HAP-1 (cell line): ENCODE measurements at regions of chr5 and their contacts with region 1.

Region 1: DNA sequence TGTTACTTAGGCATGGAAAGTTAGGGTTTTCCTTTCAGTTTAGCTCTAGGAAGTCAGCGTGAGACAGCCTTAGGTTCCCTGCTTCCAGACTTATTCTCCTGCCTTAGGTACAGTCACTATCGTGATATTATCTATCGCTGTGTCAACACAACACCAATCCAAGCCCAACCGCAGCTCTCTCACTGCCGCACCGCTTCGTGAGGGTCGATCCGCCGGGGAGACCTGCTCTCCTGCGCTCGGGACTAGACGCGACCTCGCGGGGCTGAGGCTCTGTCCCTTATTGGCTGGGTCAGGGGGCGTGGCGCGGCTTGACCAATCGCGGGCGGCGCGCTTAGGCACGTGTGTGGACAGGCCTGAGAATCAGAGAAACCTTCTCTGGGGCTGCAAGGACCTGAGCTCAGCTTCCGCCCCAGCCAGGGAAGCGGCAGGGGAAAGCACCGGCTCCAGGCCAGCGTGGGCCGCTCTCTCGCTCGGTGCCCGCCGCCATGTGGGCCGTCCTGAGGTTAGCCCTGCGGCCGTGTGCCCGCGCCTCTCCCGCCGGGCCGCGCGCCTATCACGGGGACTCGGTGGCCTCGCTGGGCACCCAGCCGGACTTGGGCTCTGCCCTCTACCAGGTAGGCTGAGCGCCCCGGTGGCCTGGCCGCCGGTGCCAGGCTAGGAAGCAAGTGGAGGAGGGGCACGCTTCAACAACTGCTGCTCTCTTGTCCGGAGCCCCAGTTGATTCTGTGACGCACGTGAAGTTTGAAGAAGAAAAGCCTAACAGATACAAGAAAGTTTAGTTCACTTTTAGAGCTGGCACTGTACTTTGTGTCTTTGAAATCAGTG is at the start of gene MCCC2:
- DNase-seq: peak; percentile 87 to 98
- H3K4me3 ChIP-seq: peak within 1 kb of the TSS; percentile 58
- H3K4me1 ChIP-seq: peaks cover 16% of the 10 kb centered on the region
- H3K27me3 ChIP-seq: no peaks in the 10 kb centered on the region

Region 2: DNA sequence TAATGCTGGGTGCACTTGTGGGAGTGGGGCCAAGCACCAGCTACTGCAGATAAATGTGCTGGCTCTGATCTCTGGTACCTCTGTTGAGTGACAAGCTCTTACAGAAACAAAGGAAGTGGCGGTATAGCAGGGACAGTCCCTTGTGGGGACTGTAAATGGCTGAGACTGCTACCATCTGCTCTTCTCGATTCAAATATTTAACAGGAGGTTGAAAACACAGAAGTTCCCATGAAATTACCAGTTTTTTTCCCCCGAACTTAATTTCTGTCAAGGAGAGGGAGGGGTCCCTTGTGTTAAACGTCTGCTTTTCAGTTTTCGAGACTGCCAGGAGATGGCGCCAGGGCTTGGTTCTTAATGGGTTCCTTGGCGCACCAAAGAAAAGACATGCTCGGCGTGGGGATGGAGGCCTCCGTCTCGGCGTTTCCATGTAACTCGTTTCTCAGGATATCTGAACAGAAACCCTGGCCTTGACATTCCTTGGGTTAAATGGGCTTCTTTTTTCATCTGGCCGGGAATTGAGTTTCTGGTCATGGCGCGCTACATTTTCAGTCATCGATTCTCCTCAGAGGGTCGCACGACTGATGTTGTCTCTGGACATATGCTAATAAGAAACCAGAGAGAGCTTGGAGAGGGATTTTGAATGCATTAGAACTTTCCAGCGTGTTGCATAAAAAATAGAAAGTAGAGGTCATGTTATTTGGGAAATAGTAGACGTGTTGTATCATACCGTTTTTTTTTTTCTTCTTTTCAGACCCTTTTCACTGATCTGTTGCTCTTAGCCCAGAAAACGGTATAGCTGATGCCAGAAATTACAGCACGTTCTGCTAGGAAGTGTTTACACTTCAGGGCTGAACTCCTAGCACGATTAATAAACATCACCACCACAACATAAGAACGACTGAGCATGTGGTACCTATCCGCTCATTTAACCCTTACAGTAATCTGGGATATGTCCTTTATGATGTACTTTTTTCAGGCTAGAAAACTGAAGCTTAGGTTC is 195.9 kb after region 1 on chr5:
- in situ Hi-C with region 1: no loop called
- DNase-seq: peak; percentile 63 to 91
- H3K4me3 ChIP-seq: no peak overlapping the region
- H3K4me1 ChIP-seq: peaks cover 2% of the 10 kb centered on the region; the same call in 1 of the 2 replicates
- H3K27me3 ChIP-seq: no peaks in the 10 kb centered on the region

Region 3: DNA sequence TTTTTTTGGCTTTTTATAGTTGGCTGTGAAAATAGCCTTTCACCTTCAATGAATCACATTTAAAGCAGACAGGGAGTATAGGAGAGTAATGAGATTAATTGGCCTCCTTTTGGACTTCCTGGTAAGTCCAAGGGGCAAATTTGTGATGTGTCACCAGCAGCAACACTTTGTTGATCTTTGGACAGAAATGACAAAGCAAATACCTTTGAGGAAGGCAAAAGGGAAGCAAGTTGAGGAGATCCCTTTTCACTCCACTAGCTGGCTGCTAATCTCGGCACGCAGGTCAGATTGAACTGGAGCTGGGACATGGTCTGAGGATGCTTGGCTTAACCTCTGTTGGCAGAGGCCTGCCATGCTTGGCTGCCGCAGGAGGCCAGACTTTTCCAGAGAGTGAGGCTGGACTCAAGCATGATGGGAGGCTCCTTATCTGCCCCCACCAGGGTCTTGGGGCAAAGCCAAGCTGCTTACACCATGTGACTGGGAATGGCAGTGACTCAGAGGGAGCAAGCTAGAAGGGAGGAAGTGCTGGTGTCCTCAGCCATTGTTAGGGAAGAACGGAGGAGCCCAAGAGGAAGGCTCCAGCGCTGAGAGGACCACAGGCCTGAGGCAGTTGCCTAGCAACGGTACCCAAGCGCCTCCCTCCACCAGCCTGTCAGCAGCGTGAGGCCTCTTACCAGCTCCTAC is 345.6 kb after region 1 on chr5:
- in situ Hi-C with region 1: no loop called
- DNase-seq: no peak
- H3K4me3 ChIP-seq: no peak overlapping the region
- H3K4me1 ChIP-seq: peaks cover 22% of the 10 kb centered on the region
- H3K27me3 ChIP-seq: no peaks in the 10 kb centered on the region

Region 4: DNA sequence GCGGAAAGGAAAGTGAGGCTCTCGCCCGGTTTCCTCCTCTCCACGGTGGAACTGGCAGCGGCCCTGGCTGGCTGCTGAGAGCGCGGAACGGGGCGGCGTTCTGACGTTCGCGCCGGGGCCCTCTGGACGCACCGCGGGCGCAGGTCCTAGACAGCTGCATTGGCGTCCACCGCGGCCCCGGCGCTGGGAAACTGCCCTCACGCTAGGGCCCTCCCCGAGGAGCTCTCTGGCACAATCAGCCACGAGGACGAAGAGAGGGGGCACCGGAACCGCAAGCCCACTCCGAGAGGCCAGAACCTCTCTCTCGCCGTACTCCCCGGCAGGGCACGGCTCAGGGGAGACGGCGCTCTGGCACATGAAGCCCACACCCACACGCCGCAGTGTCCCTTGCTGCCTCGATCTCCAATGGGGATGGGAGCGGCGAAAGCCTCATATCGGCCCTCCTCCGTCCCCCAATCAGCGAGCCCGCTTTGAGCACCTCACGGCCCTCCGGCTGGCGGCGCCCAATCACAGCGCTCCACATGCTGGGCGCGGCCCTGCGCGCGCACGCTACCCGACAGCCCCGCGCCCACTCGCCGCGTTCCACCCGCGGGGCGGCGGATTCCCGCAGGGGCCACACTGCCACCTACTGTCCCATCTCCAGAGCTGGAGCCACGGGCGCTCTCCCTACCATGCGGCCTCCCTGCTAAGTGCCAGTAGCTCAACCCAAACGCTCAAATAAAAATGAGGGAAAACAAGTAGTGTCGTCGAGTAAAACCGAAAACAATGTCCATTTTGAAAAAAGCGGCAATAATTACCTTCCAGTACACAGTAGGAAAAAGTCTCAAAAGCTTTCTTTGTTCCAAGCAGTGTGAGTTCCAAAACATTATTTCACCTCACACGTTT is 721.1 kb after region 1 on chr5:
- in situ Hi-C with region 1: loop called (anchors 25 kb)
- DNase-seq: peak; percentile 92 to 97
- H3K4me3 ChIP-seq: peak overlapping the region; percentile 66
- H3K4me1 ChIP-seq: peaks cover 33% of the 10 kb centered on the region
- H3K27me3 ChIP-seq: no peaks in the 10 kb centered on the region